K562 (cell line): ENCODE measurements at regions of chr13 and their contacts with region 1.

Region 1: DNA sequence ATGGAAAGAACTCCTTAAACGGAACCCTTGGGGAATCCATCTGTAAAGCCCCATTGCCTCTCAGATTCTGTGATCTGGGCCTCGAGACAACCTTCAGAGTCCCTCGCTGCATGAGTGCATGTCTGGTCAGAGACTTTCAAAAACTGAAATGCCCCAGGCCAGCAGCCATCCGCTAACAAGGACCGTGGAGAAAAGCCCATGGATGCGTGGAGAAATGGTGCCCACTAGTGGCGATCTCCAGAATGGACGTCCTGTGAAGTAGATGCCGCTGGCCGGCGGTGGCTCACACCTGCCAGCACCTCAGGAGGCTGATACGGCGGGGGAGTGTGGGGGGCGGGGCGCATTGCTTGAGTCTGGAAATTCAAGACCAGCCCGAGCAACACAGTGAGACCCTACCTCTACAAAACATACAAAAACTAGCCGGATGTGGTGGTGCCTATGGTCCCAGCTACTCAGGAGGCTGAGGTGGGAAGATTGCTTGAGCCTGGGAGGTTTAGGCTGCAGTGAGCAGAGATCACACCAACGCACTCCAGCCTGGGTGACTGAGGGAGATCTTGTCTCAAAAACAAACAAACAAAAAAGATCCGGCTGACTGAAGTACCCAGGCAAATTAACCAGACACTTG is 7.9 kb upstream of the CDC16 start:
- DNase-seq: peak; percentile 66 to 86 (median 71)
- ATAC-seq: peak; percentile 88
- H3K4me3 ChIP-seq: no peak overlapping the region
- H3K27ac ChIP-seq: no peak overlapping the region
- H3K4me1 ChIP-seq: peaks cover 17 to 23% of the 10 kb centered on the region in 2 experiments; a peak in 4 of 5 replicates
- H3K27me3 ChIP-seq: no peaks in the 10 kb centered on the region
- CTCF ChIP-seq: peak; percentile 88 to 92 (median 90)
- EP300 ChIP-seq: no peak
- POLR2A ChIP-seq: no peak
- RAD21 ChIP-seq: peak; percentile 95

Region 2: DNA sequence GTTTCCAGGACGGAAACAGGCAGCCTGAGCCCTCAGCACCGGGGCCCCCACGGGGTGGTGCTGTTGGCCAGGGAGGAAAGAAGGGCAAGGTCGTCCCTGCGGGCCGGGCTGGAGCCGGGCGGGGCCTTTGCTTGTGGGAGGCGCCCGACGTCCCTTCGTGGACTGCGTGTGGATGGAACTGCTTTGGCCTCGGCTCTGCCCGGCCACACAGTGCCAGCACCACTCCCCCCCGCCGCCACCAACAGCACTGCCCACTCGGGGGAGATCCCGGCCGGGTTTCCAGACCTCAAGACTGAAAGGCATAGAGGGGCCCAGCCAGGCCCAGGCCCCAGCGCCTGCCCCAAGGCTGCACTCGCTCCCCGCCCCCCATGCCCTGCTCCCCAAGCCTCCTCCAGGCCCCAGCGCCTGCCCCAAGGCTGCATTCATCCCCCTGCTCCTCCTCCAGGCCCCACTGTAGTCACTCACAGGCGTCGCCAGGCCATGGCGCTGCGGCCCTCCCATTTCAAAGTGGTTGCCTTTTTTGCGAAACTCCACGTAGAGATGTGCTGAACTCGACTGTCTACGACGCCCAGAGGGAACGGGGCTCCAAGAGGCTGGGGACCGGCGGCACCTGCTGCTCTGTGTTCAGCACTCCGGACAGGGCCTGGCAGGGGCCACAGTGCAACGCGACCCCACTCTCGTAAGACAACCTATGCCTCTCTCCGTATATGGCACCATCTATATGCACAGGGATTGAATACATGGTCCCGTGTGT is 275.4 kb before region 1 on chr13:
- CTCF ChIA-PET with region 1: interaction called, 26 read pairs
- POLR2A ChIA-PET with region 1: interaction called, 3 read pairs
- in situ Hi-C with region 1: no loop called
- intact Hi-C with region 1: loop called (anchors 1 kb)
- DNase-seq: peak; percentile 81 to 86 (median 84)
- ATAC-seq: peak; percentile 98
- H3K4me3 ChIP-seq: no peak overlapping the region
- H3K27ac ChIP-seq: no peak overlapping the region
- H3K4me1 ChIP-seq: peaks cover 9 to 41% of the 10 kb centered on the region in 2 experiments; a peak in 4 of 5 replicates
- H3K27me3 ChIP-seq: no peaks in the 10 kb centered on the region
- CTCF ChIP-seq: peak; percentile 82 to 86 (median 83)
- EP300 ChIP-seq: no peak
- POLR2A ChIP-seq: no peak
- RAD21 ChIP-seq: peak; percentile 92 to 93

Region 3: DNA sequence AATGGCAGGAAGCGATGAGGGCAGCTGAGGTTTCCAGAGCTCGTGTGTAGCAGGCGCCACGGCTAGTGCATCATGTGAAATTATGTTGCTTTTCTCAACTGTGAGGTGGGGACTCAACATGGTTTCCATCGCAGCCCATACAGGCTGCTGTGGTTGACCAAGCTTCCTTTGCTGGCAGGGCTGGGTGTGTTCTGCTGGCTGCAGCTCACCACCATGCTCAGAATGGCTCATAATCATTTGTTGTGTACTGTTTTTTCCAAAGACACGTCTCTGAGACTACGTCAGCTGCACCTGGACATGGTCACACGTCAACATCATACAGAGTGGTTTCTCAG is 78.3 kb before region 1 on chr13:
- CTCF ChIA-PET with region 1: interaction called, 3 read pairs
- POLR2A ChIA-PET with region 1: no interaction called
- in situ Hi-C with region 1: no loop called
- intact Hi-C with region 1: loop called (anchors 5 kb)
- DNase-seq: no peak
- ATAC-seq: no peak
- H3K4me3 ChIP-seq: no peak overlapping the region
- H3K27ac ChIP-seq: no peak overlapping the region
- H3K4me1 ChIP-seq: peaks cover 3 to 16% of the 10 kb centered on the region in 2 experiments; a peak in 3 of 5 replicates
- H3K27me3 ChIP-seq: no peaks in the 10 kb centered on the region; a peak in 1 of 5 replicates
- CTCF ChIP-seq: no peak
- EP300 ChIP-seq: no peak
- POLR2A ChIP-seq: no peak
- RAD21 ChIP-seq: no peak